Right ventricle myocardium inferior (tissue), 1 donor: ENCODE measurements at regions of chr2 and their contacts with region 1.

Region 1: GRCh38 chr2:236687296-236687965 is 117.8 kb downstream of the ACKR3 start:
- DNase-seq: no peak
- ATAC-seq: peak; percentile 66

Region 2: DNA sequence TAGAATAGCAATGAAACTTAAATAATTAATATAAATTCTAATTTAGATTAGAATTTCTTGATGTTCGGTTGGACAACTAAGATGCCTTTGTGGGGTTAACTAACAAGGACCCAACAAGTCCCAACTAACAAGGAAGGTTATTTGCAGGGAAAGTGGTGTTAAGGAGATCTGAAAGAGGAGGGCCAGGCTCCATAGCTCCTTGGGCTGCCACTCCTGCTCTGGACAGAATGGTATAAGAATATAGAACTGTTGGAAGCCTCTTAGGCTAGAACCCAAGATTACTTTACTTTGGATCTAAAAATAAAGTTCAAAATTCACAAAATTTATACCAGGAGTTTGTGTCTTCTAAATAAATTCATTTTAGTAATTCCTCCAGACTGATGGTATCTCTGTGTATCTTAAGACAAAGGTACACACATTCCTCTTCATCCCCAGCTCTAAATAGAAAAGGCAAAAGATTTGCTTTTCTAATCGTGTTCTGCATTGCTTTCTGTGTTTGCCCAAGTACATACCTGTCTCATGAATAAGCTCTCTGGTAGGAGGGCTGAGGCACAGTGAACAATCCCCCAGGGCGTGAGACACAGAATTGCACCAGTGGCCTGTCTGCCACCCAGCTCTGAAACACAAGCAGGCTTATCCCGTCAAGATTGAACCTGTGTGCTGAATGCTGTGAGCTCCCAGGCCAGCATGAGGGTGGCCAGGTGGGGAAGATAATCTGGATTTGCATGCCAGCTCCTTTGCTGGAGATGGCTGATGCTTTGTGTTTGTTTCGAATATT is 58.2 kb after region 1 on chr2:
- intact Hi-C with region 1: loop called (anchors 5 kb)
- DNase-seq: no peak
- ATAC-seq: no peak

Region 3: GRCh38 chr2:236803621-236804020 is 116.2 kb after region 1 on chr2:
- intact Hi-C with region 1: no loop called
- DNase-seq: no peak
- ATAC-seq: no peak